Left cardiac atrium (tissue), 4 donors: ENCODE measurements at regions of chr2 and their contacts with region 1.

Region 1: GRCh38 chr2:50143822-50144575 is 887.9 kb downstream of the NRXN1 start:
- DNase-seq: no peak
- ATAC-seq: peak; percentile 82 to 86

Region 2: DNA sequence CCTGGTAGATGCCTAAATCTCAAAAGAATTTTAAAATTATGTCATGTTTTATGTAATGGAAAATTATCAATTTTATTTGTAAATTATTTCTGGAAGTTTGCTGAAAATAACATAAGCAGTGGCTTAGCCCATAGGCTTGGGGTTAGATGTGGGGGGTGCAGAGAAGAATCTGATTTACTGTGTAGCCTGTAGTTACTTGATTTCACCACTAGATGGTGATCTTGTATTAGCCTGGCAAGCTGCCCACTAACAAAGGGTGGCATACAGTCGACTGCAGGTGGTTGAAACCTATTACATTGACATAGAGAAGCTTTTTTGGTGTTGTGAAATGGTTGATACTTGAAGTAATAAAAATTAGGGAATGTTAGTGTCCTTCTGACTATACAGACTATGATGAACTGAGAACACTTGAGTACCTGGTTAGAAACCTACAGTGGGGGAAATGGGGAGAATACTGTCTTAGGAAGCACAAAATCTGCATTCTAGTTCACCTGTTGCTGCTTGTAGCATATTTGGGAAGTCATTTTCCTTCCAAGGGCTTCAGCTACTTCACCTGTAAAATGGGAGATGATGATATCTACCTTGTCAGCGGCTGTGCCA is 1197.5 kb before region 1 on chr2:
- intact Hi-C with region 1: loop called in 1 of 2 experiments (anchors 10 kb)
- DNase-seq: peak; percentile 31
- ATAC-seq: peak; percentile 74

Region 3: DNA sequence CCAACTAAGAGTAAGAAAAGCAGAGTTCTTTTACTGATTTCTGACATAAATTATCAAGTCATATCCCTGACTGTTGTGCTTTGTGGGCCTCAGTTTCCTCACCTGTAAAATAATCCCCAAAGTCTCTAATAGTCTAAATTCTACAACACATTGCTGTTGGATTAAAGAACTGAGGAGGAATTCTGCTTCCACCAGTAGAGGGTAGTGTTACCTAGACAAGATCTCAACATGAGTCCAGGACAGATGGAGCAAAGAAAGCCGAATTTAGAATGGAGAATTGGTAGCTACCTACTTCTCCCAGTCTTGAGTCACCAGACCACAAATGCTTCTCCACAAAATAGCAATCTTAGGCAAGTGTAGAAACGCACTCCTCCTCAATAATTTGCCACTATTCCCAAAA is 527.2 kb before region 1 on chr2:
- intact Hi-C with region 1: loop called in 1 of 2 experiments (anchors 10 kb)
- DNase-seq: no peak
- ATAC-seq: peak in 1 of 2 donors; percentile 58

Region 4: GRCh38 chr2:49687918-49688317 is 456.1 kb before region 1 on chr2:
- intact Hi-C with region 1: loop called in 1 of 2 experiments (anchors 2 kb)
- DNase-seq: no peak
- ATAC-seq: no peak

Region 5: GRCh38 chr2:49770919-49771318 is 373.1 kb before region 1 on chr2:
- intact Hi-C with region 1: loop called in 1 of 2 experiments (anchors 2 kb)
- DNase-seq: peak; percentile 27
- ATAC-seq: peak; percentile 86 to 91

Region 6: GRCh38 chr2:50596515-50596914 is 452.5 kb after region 1 on chr2:
- intact Hi-C with region 1: no loop called
- DNase-seq: no peak
- ATAC-seq: no peak